Activated CD4-positive, alpha-beta memory T cell treated with anti-CD3 and anti-CD28 coated beads for 36 hours (primary cell): ENCODE measurements at regions of chr7 and their contacts with region 1.

Region 1: DNA sequence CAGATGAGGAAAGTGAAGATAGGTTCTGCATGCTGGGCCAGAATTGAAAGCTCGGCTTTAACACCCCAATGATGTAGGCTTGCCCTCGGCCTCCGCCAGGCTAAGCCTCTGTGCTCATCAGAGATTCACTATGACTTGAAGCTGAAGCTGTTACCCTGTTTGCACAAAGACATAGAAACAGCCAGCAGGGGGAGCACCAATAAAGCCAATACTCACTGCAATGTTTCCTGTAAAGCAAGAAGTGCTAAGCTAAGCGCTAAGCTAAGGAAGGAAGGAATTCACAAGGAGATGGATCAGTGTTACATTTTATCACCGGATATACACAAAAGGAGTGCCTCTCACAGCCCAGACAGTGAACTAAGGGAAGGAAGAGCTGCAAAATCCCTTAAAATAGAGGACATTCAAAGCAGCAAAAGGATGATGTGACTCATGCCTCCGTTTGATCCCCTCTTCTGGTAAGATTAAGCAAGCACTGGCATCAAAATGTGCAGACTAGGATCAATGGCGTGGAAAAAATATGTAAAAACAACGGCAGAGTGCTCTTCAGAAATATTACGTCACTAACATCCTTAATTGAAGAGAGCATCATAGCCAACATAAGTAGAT is 153.8 kb downstream of the COBL start:
- DNase-seq: peak; percentile 84
- H3K4me3 Mint-ChIP-seq: no peak overlapping the region
- H3K27ac Mint-ChIP-seq: no peak overlapping the region
- H3K4me1 Mint-ChIP-seq: peaks cover 10% of the 10 kb centered on the region
- H3K27me3 Mint-ChIP-seq: peaks cover 21% of the 10 kb centered on the region

Region 2: DNA sequence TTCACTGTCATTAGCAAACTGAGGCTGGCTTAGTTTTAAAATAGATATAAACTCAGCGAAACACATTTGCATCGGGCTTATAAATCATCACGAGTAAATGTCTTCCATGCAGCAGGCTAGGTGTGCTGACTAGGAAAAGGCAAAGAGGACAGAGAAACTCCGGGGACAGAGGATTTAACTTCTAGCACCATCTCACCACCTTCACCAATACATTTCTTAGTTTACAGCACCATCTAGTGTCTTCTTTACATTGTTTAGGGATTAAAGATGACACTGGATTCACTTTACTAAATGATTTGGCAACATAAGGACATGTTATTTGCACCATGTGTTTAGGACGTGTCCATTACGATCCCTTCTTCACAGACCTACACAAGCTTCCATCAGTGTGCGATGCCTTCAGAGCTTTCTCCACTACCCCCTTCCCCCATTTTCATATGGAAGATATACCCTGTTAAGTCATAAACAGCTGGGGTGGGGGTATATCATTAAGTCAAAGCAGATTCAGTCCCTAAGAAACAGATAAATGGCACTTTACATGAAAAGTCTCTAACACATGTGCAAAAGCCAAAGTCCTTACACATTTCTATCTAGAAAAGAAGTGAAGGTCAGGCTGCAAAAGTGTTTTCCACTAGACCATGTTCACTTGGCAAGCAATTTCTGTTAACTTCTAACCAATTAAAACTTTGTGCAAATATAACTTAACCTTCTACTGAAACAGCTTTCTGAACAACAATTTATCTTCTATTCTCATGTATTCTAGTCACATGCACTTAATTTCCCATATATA is 483.4 kb before region 1 on chr7:
- CTCF ChIA-PET with region 1: interaction called, 14 read pairs
- POLR2A ChIA-PET with region 1: no interaction called
- intact Hi-C with region 1: no loop called
- DNase-seq: no peak
- H3K4me3 Mint-ChIP-seq: no peak overlapping the region
- H3K27ac Mint-ChIP-seq: no peak overlapping the region
- H3K4me1 Mint-ChIP-seq: no peaks in the 10 kb centered on the region
- H3K27me3 Mint-ChIP-seq: no peaks in the 10 kb centered on the region

Region 3: GRCh38 chr7:50921114-50921813 is 241.6 kb before region 1 on chr7:
- CTCF ChIA-PET with region 1: no interaction called
- POLR2A ChIA-PET with region 1: no interaction called
- intact Hi-C with region 1: no loop called
- DNase-seq: peak; percentile 21
- H3K4me3 Mint-ChIP-seq: no peak overlapping the region
- H3K27ac Mint-ChIP-seq: no peak overlapping the region
- H3K4me1 Mint-ChIP-seq: no peaks in the 10 kb centered on the region
- H3K27me3 Mint-ChIP-seq: peaks cover 2% of the 10 kb centered on the region

Region 4: GRCh38 chr7:51014821-51015220 is 148.0 kb before region 1 on chr7:
- CTCF ChIA-PET with region 1: no interaction called
- POLR2A ChIA-PET with region 1: no interaction called
- intact Hi-C with region 1: no loop called
- DNase-seq: no peak
- H3K4me3 Mint-ChIP-seq: no peak overlapping the region
- H3K27ac Mint-ChIP-seq: no peak overlapping the region
- H3K4me1 Mint-ChIP-seq: peaks cover 3% of the 10 kb centered on the region
- H3K27me3 Mint-ChIP-seq: no peaks in the 10 kb centered on the region

Region 5: GRCh38 chr7:51067757-51068156 is 95.1 kb before region 1 on chr7:
- CTCF ChIA-PET with region 1: interaction called, 15 read pairs
- POLR2A ChIA-PET with region 1: no interaction called
- intact Hi-C with region 1: no loop called
- DNase-seq: peak; percentile 54
- H3K4me3 Mint-ChIP-seq: no peak overlapping the region
- H3K27ac Mint-ChIP-seq: no peak overlapping the region
- H3K4me1 Mint-ChIP-seq: no peaks in the 10 kb centered on the region
- H3K27me3 Mint-ChIP-seq: no peaks in the 10 kb centered on the region

Region 6: DNA sequence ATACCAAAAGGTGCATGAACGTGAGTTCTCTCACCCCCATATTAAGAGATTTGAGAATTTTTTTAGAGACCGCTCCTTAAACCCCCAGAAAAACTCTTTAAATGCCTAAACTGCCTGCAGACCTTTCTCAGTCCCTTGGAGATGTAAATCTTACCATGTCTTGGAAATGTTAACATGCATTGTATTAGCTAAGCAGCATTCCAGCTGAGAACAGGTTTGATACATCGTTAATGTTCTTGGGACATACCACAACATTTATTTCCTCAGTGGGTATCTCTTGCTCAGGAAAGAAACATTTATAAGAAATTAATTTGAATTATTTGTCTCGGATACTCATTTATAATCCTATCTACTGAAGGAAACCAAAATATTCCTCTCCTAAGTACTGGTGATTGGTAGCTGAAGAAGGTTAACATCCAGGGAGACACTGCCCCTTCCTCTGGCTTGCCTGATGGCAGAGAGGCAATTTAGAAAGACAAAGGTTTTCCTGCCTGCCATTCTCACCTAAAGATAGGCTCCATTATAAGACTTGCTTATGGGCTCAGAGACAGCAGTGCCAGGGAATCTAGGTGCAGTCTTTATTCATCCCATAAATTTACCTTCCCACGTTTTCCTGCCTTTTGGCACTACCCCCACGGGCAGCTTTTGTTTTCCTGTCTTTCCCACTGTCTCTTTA is 12.6 kb after region 1 on chr7:
- CTCF ChIA-PET with region 1: interaction called, 40 read pairs
- POLR2A ChIA-PET with region 1: no interaction called
- intact Hi-C with region 1: no loop called
- DNase-seq: no peak
- H3K4me3 Mint-ChIP-seq: no peak overlapping the region
- H3K27ac Mint-ChIP-seq: no peak overlapping the region
- H3K4me1 Mint-ChIP-seq: no peaks in the 10 kb centered on the region
- H3K27me3 Mint-ChIP-seq: peaks cover 14% of the 10 kb centered on the region

Region 7: DNA sequence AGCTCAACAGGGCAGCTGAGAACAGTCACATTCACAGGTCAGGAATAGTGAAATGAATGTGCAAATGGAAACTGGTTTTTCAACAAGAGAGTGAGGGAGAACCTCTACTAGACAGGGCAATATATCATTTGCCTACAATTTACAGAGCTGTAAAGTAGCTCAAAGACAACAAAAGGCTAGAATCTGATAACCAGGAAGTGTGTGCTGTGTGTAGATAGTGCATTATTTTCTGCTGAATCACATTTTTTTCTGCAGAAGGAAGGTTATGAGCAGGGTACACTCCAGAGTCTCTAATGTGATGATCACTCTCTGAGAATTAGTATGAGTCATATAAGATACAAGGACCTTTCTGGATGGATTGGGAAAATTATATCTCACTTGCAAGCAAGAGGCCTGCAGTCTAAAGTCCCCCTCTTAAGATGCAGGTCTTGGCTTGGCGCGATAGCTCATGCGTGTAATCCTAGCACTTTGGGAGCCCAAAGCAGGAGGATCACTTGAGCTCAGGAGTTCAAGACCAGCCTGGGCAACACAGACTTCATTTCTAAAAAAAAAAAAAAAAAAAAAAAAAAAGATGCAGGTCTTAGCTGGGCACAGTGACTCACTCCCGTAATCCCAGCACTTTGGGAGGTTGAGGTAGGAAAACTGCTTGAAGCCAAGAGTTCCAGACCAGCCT is 213.7 kb after region 1 on chr7:
- CTCF ChIA-PET with region 1: interaction called, 11 read pairs
- POLR2A ChIA-PET with region 1: no interaction called
- intact Hi-C with region 1: no loop called
- DNase-seq: no peak
- H3K4me3 Mint-ChIP-seq: no peak overlapping the region
- H3K27ac Mint-ChIP-seq: no peak overlapping the region
- H3K4me1 Mint-ChIP-seq: no peaks in the 10 kb centered on the region
- H3K27me3 Mint-ChIP-seq: no peaks in the 10 kb centered on the region

Region 8: GRCh38 chr7:52179934-52180333 is 1017.1 kb after region 1 on chr7:
- CTCF ChIA-PET with region 1: no interaction called
- POLR2A ChIA-PET with region 1: no interaction called
- intact Hi-C with region 1: no loop called
- DNase-seq: no peak
- H3K4me3 Mint-ChIP-seq: no peak overlapping the region
- H3K27ac Mint-ChIP-seq: no peak overlapping the region
- H3K4me1 Mint-ChIP-seq: no peaks in the 10 kb centered on the region
- H3K27me3 Mint-ChIP-seq: no peaks in the 10 kb centered on the region